AG04449 (cell line): ENCODE measurements at regions of chr16 and their contacts with region 1.

Region 1: GRCh38 chr16:87278191-87279095 is 38.7 kb downstream of the C16orf95 start:
- DNase-seq: peak; percentile 31
- H3K4me3 ChIP-seq: no peak overlapping the region
- CTCF ChIP-seq: peak; percentile 97

Region 2: GRCh38 chr16:87190288-87191230 is 87.9 kb before region 1 on chr16:
- CTCF ChIA-PET with region 1: interaction called, 17 read pairs
- POLR2A ChIA-PET with region 1: no interaction called
- DNase-seq: no peak
- H3K4me3 ChIP-seq: no peak overlapping the region
- CTCF ChIP-seq: no peak

Region 3: GRCh38 chr16:87263471-87263961 is 14.9 kb before region 1 on chr16:
- CTCF ChIA-PET with region 1: interaction called, 64 read pairs
- POLR2A ChIA-PET with region 1: no interaction called
- DNase-seq: no peak
- H3K4me3 ChIP-seq: no peak overlapping the region
- CTCF ChIP-seq: no peak

Region 4: DNA sequence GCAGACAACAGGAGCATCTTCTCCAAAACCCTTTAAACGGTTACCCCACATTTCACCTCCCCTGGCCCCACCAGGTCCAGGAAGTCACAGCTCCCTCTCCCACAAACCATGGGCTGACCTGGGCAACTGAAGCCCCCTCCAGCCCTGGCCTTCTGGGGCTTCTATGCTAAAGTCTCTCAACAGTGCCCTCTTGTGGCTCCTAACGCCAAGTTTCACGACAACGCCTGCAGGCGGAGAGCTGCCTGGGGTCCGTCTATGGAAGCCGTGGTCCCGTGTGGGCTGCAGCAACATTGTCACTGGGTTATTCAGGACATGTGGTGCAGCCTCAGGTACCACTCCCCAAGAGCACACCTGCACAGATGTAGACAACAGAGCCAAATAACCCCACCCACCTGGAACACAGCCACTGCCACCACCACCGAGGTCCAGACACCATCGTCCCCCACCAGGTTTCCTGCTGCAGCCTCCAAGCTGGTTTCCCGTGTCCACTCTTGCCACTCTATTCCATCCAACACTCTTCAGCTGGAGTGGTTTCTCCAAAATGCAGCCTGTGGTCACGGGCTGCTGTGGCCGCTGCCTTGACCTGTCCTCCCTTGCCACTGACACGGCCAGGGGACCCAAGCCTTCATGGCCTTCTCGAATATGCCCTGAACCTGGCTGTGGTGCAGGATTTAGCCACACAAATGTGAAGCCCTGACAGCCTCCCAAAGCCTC is 19.6 kb after region 1 on chr16:
- CTCF ChIA-PET with region 1: interaction called, 38 read pairs
- POLR2A ChIA-PET with region 1: no interaction called
- DNase-seq: no peak
- H3K4me3 ChIP-seq: no peak overlapping the region
- CTCF ChIP-seq: peak; percentile 66

Region 5: GRCh38 chr16:87310610-87311009 is 32.2 kb after region 1 on chr16:
- CTCF ChIA-PET with region 1: no interaction called
- POLR2A ChIA-PET with region 1: no interaction called
- DNase-seq: no peak
- H3K4me3 ChIP-seq: no peak overlapping the region
- CTCF ChIP-seq: no peak

Region 6: GRCh38 chr16:87358696-87359095 is 80.3 kb after region 1 on chr16:
- CTCF ChIA-PET with region 1: no interaction called
- POLR2A ChIA-PET with region 1: no interaction called
- DNase-seq: no peak
- H3K4me3 ChIP-seq: no peak overlapping the region
- CTCF ChIP-seq: no peak